ENCODE measurements at regions of chr6 and their contacts with region 1.

Region 1: DNA sequence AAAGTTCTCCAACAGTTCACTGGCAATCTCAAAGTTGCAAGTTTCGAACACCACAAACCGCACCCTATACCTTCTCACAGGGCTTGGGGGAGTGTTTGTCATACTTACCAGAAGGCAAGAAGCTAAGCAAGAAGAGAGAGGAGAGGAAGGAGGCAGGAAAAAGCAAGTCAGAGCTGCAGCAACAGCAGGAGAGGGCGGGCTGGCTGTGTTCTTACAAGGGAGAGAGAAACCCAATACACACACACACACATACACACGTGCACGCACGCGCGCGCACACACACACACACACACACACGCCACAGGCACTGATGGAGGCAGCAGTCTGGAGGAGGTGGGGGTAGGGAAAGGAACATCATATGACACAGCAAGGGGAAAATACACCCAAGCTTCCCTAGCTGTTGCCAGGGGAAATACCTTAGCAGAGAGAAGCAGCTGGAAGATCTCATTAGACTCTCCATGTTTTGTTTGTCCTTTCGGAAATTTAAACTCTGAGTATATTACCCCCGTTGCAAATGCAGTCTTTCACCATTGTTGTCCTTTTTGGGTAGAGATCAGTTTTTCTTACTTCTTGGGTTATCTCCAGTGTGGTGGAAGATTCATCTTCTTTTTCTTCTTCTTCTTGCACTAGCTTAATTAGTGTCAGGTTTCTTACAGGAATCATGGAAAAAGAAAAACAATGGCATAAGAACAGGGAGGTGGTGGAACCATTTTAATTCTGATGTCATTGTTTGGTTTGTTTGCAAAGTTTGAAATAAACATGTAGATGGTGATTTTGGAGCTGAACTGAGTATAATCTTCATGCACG is at the start of gene TXLNB:
- DNase-seq: peak; percentile 95
- H3K4me3 Mint-ChIP-seq: peak within 1 kb of the TSS; percentile 84
- H3K27ac Mint-ChIP-seq: peak within 1 kb of the TSS; percentile 99
- H3K4me1 Mint-ChIP-seq: peaks cover 47% of the 10 kb centered on the region
- H3K27me3 Mint-ChIP-seq: no peaks in the 10 kb centered on the region
- total RNA-seq, gene TXLNB: 0.09 TPM in 1 of 2 replicates, not detected in the other

Region 2: GRCh38 chr6:138987640-138988468 is 304.2 kb before region 1 on chr6 and contains the start of gene REPS1:
- intact Hi-C with region 1: loop called (anchors 5 kb)
- DNase-seq: peak; percentile 98
- H3K4me3 Mint-ChIP-seq: peak within 1 kb of the TSS; percentile 91
- H3K27ac Mint-ChIP-seq: peak within 1 kb of the TSS; percentile 97
- H3K4me1 Mint-ChIP-seq: peaks cover 19% of the 10 kb centered on the region
- H3K27me3 Mint-ChIP-seq: peaks cover under 1% of the 10 kb centered on the region
- total RNA-seq, gene REPS1: 65.8 and 70.1 TPM in 2 replicates

Region 3: GRCh38 chr6:139161817-139162284 is 130.2 kb before region 1 on chr6:
- intact Hi-C with region 1: loop called (anchors 2 kb)
- DNase-seq: peak; percentile 91
- H3K4me3 Mint-ChIP-seq: peak overlapping the region; percentile 80
- H3K27ac Mint-ChIP-seq: peak overlapping the region; percentile 98
- H3K4me1 Mint-ChIP-seq: peaks cover 66% of the 10 kb centered on the region
- H3K27me3 Mint-ChIP-seq: no peaks in the 10 kb centered on the region

Region 4: GRCh38 chr6:139262519-139263300 is 29.3 kb before region 1 on chr6:
- intact Hi-C with region 1: loop called (anchors 1 kb)
- DNase-seq: peak; percentile 77
- H3K4me3 Mint-ChIP-seq: peak overlapping the region; percentile 75
- H3K27ac Mint-ChIP-seq: peak overlapping the region; percentile 90
- H3K4me1 Mint-ChIP-seq: peaks cover 21% of the 10 kb centered on the region
- H3K27me3 Mint-ChIP-seq: no peaks in the 10 kb centered on the region

Region 5: DNA sequence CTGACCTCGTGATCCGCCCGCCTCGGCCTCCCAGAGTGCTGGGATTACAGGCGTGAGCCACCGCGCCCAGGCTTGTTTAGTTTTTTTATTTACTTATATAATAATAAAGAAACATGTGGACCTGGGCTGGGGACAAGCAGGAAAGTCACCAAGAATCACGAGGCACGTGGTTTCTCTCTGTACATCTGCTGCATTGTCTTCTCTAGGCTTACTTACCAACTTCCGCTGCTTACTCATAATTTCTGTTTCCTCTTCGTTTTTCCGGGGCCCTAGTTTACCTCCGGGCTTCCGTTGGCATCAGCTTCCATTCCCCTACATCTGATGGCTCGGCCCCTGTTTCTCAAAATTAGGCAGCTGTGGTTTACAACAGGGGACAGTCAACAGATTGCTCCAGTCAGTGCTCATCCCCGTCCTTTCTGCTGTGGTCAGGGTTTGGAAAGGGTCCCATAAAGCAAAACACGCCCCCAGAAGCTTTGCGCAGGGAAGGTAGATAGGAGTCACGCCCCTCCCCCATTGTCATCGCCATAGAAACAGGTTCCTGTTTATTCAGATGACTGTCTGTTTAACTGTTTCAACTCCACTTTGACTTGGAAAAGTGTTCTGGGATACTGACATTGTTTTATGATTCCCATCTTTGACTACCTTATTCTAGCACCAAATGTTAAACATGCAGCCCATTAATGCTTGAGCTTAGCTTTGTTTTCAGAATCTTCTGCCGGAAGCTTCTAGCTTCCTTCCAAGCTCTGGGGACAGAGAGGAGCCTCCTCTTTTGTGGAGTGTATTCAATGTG is 31.7 kb after region 1 on chr6:
- intact Hi-C with region 1: loop called (anchors 1 kb)
- DNase-seq: peak; percentile 92
- H3K4me3 Mint-ChIP-seq: peak overlapping the region; percentile 83
- H3K27ac Mint-ChIP-seq: peak overlapping the region; percentile 99
- H3K4me1 Mint-ChIP-seq: peaks cover 21% of the 10 kb centered on the region
- H3K27me3 Mint-ChIP-seq: no peaks in the 10 kb centered on the region

Region 6: GRCh38 chr6:139375232-139376016 is 83.4 kb after region 1 on chr6:
- intact Hi-C with region 1: loop called (anchors 1 kb)
- DNase-seq: peak; percentile 96
- H3K4me3 Mint-ChIP-seq: peak overlapping the region; percentile 99
- H3K27ac Mint-ChIP-seq: peak overlapping the region; percentile 98
- H3K4me1 Mint-ChIP-seq: peaks cover 32% of the 10 kb centered on the region
- H3K27me3 Mint-ChIP-seq: no peaks in the 10 kb centered on the region

Measured in activated CD4-positive, alpha-beta T cell treated with anti-CD3 and anti-CD28 coated beads, Interleukin-2, amount 10 ng/mL, durations not matched to agents 24 days and 14 days (primary cell).